Naive thymus-derived CD4-positive, alpha-beta T cell (primary cell): ENCODE measurements at regions of chr9 and their contacts with region 1.

Region 1: GRCh38 chr9:137200311-137201204 is at the start of gene TPRN:
- DNase-seq: peak; percentile 89 to 98 (median 97)
- ATAC-seq: peak; percentile 98
- H3K4me3 ChIP-seq: peak within 1 kb of the TSS; percentile 75
- H3K4me3 Mint-ChIP-seq: peak within 1 kb of the TSS; percentile 77 to 89 (median 84)
- H3K27ac ChIP-seq: peak within 1 kb of the TSS; percentile 78
- H3K27ac Mint-ChIP-seq: peak within 1 kb of the TSS; percentile 12 to 91 (median 78)
- H3K4me1 ChIP-seq: peaks cover 20 to 23% of the 10 kb centered on the region in 2 donors
- H3K4me1 Mint-ChIP-seq: peaks cover 16 to 34% (median 23%) of the 10 kb centered on the region in 7 donors
- H3K27me3 ChIP-seq: no peaks in the 10 kb centered on the region
- H3K27me3 Mint-ChIP-seq: no peaks in the 10 kb centered on the region
- total RNA-seq, gene TPRN: 7.1 to 13.5 (median 8.5) TPM

Region 2: DNA sequence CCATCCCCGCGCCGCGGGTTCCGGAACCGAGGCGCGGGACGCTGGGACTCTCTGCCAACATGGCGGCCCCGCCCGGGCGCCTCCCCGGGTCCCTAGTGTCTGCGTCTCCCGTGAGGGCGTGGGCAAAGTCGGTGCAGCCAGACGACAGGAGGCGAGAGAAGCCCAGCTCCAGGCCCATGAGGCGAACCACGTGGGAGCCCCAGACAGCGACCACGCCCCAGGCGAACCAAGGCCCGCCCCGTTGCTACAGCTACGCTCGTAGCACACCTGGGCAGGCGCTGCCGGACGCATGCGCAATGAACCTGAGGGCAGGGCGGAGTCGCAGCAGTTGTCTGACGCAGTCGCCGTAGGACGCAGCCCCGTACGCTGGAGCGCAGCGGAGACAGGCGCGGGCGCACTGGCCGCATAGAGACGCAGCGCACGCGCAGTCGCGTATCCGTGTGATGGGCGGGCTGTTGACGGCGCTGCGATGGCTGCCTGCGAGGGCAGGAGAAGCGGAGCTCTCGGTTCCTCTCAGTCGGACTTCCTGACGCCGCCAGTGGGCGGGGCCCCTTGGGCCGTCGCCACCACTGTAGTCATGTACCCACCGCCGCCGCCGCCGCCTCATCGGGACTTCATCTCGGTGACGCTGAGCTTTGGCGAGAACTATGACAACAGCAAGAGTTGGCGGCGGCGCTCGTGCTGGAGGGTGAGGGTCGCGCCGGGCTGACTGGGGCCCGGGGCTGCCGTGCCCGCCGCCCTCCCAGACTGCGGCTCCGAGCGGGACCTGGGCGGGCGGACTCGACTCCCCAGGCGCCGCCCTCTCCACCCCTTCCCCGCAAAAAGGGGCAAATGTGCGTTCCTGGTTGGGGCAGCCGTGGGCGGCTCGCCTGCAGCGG is 113.8 kb before region 1 on chr9 and contains the start of gene MAN1B1:
- CTCF ChIA-PET with region 1: no interaction called
- POLR2A ChIA-PET with region 1: interaction called, 4 read pairs
- intact Hi-C with region 1: loop called (anchors 1 to 2 kb)
- DNase-seq: peak; percentile 96 to 100 (median 99)
- ATAC-seq: peak; percentile 92
- H3K4me3 ChIP-seq: peak within 1 kb of the TSS; percentile 73
- H3K4me3 Mint-ChIP-seq: peak within 1 kb of the TSS; percentile 88 to 96 (median 92)
- H3K27ac ChIP-seq: peak within 1 kb of the TSS; percentile 92
- H3K27ac Mint-ChIP-seq: peak within 1 kb of the TSS; percentile 92 to 98 (median 95)
- H3K4me1 ChIP-seq: peaks cover 18% of the 10 kb centered on the region in 2 donors
- H3K4me1 Mint-ChIP-seq: peaks cover 25 to 34% (median 30%) of the 10 kb centered on the region in 7 donors
- H3K27me3 ChIP-seq: no peaks in the 10 kb centered on the region
- H3K27me3 Mint-ChIP-seq: no peaks in the 10 kb centered on the region
- total RNA-seq, gene MAN1B1: 57.3 to 74.2 (median 70.2) TPM

Region 3: GRCh38 chr9:137114610-137115391 is 85.8 kb before region 1 on chr9 and contains the start of gene DPP7:
- CTCF ChIA-PET with region 1: no interaction called
- POLR2A ChIA-PET with region 1: no interaction called
- intact Hi-C with region 1: loop called in 1 of 2 experiments (anchors 1 kb)
- DNase-seq: peak; percentile 63 to 88 (median 80)
- ATAC-seq: peak; percentile 93
- H3K4me3 ChIP-seq: peak within 1 kb of the TSS; percentile 54
- H3K4me3 Mint-ChIP-seq: peak within 1 kb of the TSS; percentile 38 to 82 (median 69)
- H3K27ac ChIP-seq: peak within 1 kb of the TSS; percentile 81
- H3K27ac Mint-ChIP-seq: peak within 1 kb of the TSS in 4 of 9 donors; percentile 24 to 78 (median 40)
- H3K4me1 ChIP-seq: peaks cover 0 to 4% of the 10 kb centered on the region in 2 donors
- H3K4me1 Mint-ChIP-seq: peaks cover 0 to 13% (median 6%) of the 10 kb centered on the region in 7 donors
- H3K27me3 ChIP-seq: no peaks in the 10 kb centered on the region
- H3K27me3 Mint-ChIP-seq: no peaks in the 10 kb centered on the region
- total RNA-seq, gene DPP7: 235 to 328 (median 298) TPM

Region 4: GRCh38 chr9:137129456-137130175 is 70.9 kb before region 1 on chr9:
- CTCF ChIA-PET with region 1: interaction called, 3 read pairs
- POLR2A ChIA-PET with region 1: interaction called, 10 read pairs
- intact Hi-C with region 1: loop called (anchors 1 kb)
- DNase-seq: peak; percentile 74 to 93 (median 90)
- ATAC-seq: peak; percentile 98
- H3K4me3 ChIP-seq: peak overlapping the region; percentile 85
- H3K4me3 Mint-ChIP-seq: peak overlapping the region; percentile 83 to 93 (median 90)
- H3K27ac ChIP-seq: peak overlapping the region; percentile 85
- H3K27ac Mint-ChIP-seq: peak overlapping the region; percentile 67 to 88 (median 81)
- H3K4me1 ChIP-seq: peaks cover 21 to 28% of the 10 kb centered on the region in 2 donors
- H3K4me1 Mint-ChIP-seq: peaks cover 23 to 34% (median 27%) of the 10 kb centered on the region in 7 donors
- H3K27me3 ChIP-seq: no peaks in the 10 kb centered on the region
- H3K27me3 Mint-ChIP-seq: peaks cover 9 to 10% (median 9%) of the 10 kb centered on the region in 5 donors

Region 5: DNA sequence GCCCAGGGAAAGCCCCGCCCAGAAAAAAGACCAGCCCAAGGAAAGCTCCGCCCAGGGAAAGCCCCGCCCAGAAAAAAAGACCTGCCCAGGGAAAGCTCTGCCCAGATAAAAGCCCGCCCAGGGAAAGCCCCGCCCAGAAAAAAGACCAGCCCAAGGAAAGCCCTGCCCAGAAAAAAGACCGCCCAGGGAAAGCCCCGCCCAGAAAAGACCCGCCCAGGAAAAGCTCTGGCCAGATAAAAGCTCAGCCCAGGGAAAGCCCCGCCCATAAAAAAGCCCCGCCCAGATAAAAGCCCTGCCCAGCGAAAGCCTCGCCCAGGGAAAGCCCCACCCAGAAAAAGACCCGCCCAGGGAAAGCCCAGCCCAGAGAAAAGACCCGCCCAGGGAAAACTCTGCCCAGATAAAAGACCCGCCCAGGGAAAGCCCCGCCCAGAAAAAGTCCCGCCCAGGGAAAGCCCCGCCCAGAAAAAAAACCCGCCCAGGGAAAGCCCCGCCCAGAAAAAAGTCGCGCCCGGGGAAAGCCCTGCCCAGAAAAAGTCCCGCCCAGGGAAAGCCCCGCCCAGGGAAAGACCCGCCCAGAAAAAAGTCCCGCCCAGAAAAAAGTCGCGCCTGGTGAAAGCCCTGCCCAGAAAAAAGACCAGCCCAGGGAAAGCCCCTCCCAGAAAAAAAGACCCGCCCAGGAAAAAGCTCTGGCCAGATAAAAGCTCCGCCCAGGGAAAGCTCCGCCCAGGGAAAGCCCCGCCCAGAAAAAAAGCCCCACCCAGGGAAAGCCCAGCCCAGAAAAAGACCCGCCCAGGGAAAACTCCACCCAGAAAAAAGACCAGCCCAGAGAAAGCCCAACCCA is 49.7 kb before region 1 on chr9:
- CTCF ChIA-PET with region 1: no interaction called
- POLR2A ChIA-PET with region 1: no interaction called
- intact Hi-C with region 1: loop called in 1 of 2 experiments (anchors 2 kb)
- DNase-seq: peak in 1 of 9 donors; percentile 68
- ATAC-seq: no peak
- H3K4me3 ChIP-seq: no peak overlapping the region
- H3K4me3 Mint-ChIP-seq: no peak overlapping the region
- H3K27ac ChIP-seq: no peak overlapping the region
- H3K27ac Mint-ChIP-seq: peak overlapping the region in 1 of 9 donors; percentile 65
- H3K4me1 ChIP-seq: no peaks in the 10 kb centered on the region
- H3K4me1 Mint-ChIP-seq: peaks cover 0 to 10% (median 0%) of the 10 kb centered on the region in 7 donors
- H3K27me3 ChIP-seq: peaks cover 0 to 4% of the 10 kb centered on the region in 2 donors
- H3K27me3 Mint-ChIP-seq: peaks cover 7 to 16% (median 12%) of the 10 kb centered on the region in 5 donors

Region 6: GRCh38 chr9:137188490-137189296 is 11.9 kb before region 1 on chr9 and contains the starts of genes ANAPC2 and SSNA1:
- CTCF ChIA-PET with region 1: no interaction called
- POLR2A ChIA-PET with region 1: interaction called, 136 read pairs
- intact Hi-C with region 1: loop called (anchors 1 kb)
- DNase-seq: peak; percentile 86 to 99 (median 93)
- ATAC-seq: peak; percentile 91
- H3K4me3 ChIP-seq: peak within 1 kb of the TSS; percentile 98
- H3K4me3 Mint-ChIP-seq: peak within 1 kb of the TSS; percentile 91 to 99 (median 92)
- H3K27ac ChIP-seq: peak within 1 kb of the TSS; percentile 99
- H3K27ac Mint-ChIP-seq: peak within 1 kb of the TSS; percentile 85 to 96 (median 93)
- H3K4me1 ChIP-seq: peaks cover 30 to 32% of the 10 kb centered on the region in 2 donors
- H3K4me1 Mint-ChIP-seq: peaks cover 14 to 61% (median 32%) of the 10 kb centered on the region in 7 donors
- H3K27me3 ChIP-seq: no peaks in the 10 kb centered on the region
- H3K27me3 Mint-ChIP-seq: no peaks in the 10 kb centered on the region
- total RNA-seq, gene ANAPC2: 77.3 to 147 (median 134) TPM
- total RNA-seq, gene SSNA1: 37.9 to 75.6 (median 46.8) TPM

Region 7: GRCh38 chr9:137254624-137255447 is 54.3 kb after region 1 on chr9 and contains the start of gene NELFB:
- CTCF ChIA-PET with region 1: no interaction called
- POLR2A ChIA-PET with region 1: interaction called, 4 read pairs
- intact Hi-C with region 1: loop called in 1 of 2 experiments (anchors 1 kb)
- DNase-seq: peak; percentile 89 to 100 (median 95)
- ATAC-seq: peak; percentile 97
- H3K4me3 ChIP-seq: peak within 1 kb of the TSS; percentile 91
- H3K4me3 Mint-ChIP-seq: peak within 1 kb of the TSS; percentile 79 to 94 (median 88)
- H3K27ac ChIP-seq: peak within 1 kb of the TSS; percentile 70
- H3K27ac Mint-ChIP-seq: peak within 1 kb of the TSS in 7 of 9 donors; percentile 65 to 91 (median 82)
- H3K4me1 ChIP-seq: peaks cover 11% of the 10 kb centered on the region in 2 donors
- H3K4me1 Mint-ChIP-seq: peaks cover 0 to 22% (median 17%) of the 10 kb centered on the region in 7 donors
- H3K27me3 ChIP-seq: no peaks in the 10 kb centered on the region
- H3K27me3 Mint-ChIP-seq: no peaks in the 10 kb centered on the region
- total RNA-seq, gene NELFB: 33.4 to 64.2 (median 38.9) TPM